IMR-90 (cell line): ENCODE measurements at regions of chr1 and their contacts with region 1.

Region 1: GRCh38 chr1:17059739-17060460 is 6.1 kb upstream of the SDHB start:
- DNase-seq: peak; percentile 71
- ATAC-seq: peak; percentile 93
- H3K4me3 ChIP-seq: no peak overlapping the region
- H3K27ac ChIP-seq: no peak overlapping the region
- H3K4me1 ChIP-seq: no peaks in the 10 kb centered on the region
- H3K27me3 ChIP-seq: no peaks in the 10 kb centered on the region
- CTCF ChIP-seq: peak; percentile 91
- POLR2A ChIP-seq: no peak
- RAD21 ChIP-seq: peak; percentile 95

Region 2: DNA sequence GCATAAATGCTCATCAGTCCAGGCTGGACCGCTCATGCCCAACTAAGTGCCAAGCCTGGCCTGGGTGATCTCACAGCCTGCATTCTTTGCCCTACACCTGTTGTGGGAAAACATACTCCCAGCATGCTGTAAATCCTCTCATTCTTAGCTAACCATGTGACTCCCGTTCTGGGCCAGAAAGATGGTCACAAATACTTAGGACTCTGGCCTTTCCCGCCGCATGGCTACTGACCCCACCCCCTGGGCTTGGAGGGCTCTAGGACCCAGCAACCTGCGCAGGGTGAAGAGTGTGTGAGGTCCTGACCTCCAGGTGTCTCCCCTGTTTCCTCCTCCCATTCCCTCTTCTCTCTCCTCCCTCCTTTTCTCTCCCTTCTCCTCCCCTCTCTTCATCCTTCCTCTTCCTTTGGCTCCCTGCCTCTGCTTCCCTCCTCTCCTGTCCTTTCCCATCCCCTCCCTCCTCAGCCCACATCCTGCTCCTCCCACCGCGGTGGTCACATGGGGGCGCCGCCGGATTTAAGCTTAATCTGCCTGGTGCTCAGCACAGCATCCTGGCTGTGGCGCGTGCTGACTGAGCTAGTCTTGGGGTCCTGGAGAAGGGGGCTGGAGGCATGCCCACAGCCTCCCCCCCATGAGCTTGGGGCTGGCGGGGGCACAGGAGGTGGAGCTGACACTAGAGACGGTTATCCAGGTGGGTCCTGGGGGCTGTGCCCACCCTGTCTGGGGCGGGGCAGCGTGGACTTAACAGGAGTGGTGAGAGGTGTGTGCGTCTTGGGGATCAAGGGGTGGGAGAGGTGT is 138.3 kb before region 1 on chr1 and contains the start of gene CROCC:
- CTCF ChIA-PET with region 1: no interaction called
- POLR2A ChIA-PET with region 1: no interaction called
- dilution Hi-C with region 1: no loop called
- in situ Hi-C with region 1: no loop called
- intact Hi-C with region 1: no loop called
- DNase-seq: no peak
- ATAC-seq: peak; percentile 60
- H3K4me3 ChIP-seq: no peak within 1 kb of the TSS
- H3K27ac ChIP-seq: no peak within 1 kb of the TSS
- H3K4me1 ChIP-seq: peaks cover 5% of the 10 kb centered on the region; the same call in 1 of the 2 replicates
- H3K27me3 ChIP-seq: no peaks in the 10 kb centered on the region; the same call in 1 of the 2 replicates
- CTCF ChIP-seq: no peak
- POLR2A ChIP-seq: no peak
- RAD21 ChIP-seq: no peak
- total RNA-seq, gene CROCC: 7.2 and 7.5 TPM in 2 replicates

Region 3: GRCh38 chr1:17236779-17237560 is 177.1 kb after region 1 on chr1:
- CTCF ChIA-PET with region 1: interaction called, 3 read pairs
- POLR2A ChIA-PET with region 1: no interaction called
- dilution Hi-C with region 1: no loop called
- in situ Hi-C with region 1: loop called (anchors 5 kb)
- intact Hi-C with region 1: loop called (anchors 1 kb)
- DNase-seq: peak; percentile 75
- ATAC-seq: peak; percentile 65
- H3K4me3 ChIP-seq: no peak overlapping the region
- H3K27ac ChIP-seq: no peak overlapping the region
- H3K4me1 ChIP-seq: peaks cover 13% of the 10 kb centered on the region
- H3K27me3 ChIP-seq: peaks cover 18% of the 10 kb centered on the region
- CTCF ChIP-seq: peak; percentile 90
- POLR2A ChIP-seq: peak; percentile 58; the same call in 1 of the 2 replicates
- RAD21 ChIP-seq: peak; percentile 97

Region 4: DNA sequence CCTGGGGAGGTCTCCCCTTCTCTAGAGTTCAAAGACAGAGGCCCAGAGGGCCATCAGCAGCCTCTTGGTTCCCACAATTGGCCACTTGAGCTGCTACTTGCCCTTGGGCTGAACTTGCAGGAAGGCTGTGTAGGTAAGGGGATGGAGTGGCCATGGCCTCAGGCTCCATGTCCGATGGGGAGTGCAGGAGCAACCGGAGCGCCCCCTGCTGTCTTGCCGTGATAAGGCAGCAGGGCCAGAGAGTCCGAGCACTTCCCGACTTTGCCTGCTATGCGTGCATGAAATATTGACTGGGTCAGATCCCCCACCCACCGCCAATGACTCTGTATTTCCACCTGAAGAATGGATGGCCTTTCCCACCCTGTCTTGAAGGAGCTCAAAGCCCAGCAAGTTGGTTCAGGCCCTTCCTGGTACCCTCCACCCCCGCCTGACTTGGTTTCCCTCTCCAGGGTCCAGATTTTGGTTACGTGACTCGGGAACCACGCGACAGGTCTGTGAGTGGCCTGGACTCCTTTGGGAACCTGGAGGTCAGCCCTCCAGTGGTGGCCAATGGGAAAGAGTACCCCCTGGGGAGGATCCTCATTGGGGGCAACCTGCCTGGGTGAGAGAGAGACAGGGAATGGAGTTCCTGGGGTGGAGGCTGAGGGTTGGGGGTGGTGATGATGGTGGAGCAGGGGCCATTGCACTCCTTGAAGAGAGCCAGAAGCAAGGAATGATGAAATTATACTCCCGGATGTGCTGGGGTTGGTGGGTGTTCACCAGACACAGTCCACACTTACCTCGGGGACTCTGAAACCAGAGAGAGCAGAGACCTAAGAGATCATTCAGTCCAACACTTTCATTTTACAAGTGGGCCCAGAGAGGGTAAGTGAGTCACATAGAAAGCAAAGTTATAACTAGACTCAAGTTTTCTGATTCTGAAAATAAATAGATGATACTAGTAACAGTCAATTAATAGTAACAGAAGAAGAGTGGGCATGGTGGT is 214.6 kb after region 1 on chr1:
- CTCF ChIA-PET with region 1: no interaction called
- POLR2A ChIA-PET with region 1: no interaction called
- dilution Hi-C with region 1: no loop called
- in situ Hi-C with region 1: no loop called
- intact Hi-C with region 1: loop called (anchors 1 kb)
- DNase-seq: peak; percentile 29
- ATAC-seq: peak; percentile 85
- H3K4me3 ChIP-seq: no peak overlapping the region
- H3K27ac ChIP-seq: no peak overlapping the region
- H3K4me1 ChIP-seq: no peaks in the 10 kb centered on the region
- H3K27me3 ChIP-seq: peaks cover 21% of the 10 kb centered on the region
- CTCF ChIP-seq: peak; percentile 63
- POLR2A ChIP-seq: no peak
- RAD21 ChIP-seq: peak; percentile 68

Region 5: DNA sequence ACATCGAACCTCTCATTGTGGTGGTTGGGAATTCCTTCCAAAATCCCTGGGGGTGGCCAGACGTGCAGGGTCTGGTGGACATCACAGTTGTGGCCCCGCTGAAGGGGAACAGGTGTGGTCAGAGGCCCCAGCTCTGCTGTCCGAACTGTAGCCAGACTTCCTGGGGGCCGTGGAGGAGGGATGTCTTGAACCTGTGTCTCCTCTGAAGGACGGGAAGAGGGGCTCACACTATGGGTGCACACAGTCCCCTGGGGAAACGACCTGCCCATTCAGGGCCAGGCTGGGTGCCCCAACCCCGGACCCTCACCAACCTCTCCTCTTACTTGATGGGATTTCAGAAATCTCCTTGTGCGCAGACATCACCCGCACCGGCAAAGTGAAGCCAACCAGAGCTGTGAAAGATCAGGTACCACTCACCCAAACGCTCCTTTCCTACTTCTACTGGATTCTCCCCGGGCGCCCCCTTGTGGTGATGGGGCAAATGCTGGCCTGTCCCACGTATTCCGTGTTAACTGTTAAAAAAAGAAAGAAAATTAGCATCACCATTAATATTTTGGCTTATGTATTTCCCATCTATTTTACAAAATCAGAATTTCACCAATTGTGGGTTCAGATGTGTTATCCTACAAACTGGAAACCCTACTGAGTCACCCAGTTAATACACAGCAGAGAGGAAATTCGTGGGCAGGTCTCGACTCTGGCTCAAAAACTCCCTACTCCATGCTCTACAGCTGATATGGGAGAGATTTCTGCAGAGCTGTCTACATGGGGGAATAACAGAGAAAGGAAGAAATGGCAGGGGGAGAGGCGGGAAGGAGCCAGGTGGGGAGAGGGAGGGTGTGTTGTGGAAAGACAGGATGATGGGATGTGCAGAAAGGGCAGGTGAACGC is 276.2 kb after region 1 on chr1:
- CTCF ChIA-PET with region 1: no interaction called
- POLR2A ChIA-PET with region 1: no interaction called
- dilution Hi-C with region 1: no loop called
- in situ Hi-C with region 1: no loop called
- intact Hi-C with region 1: loop called (anchors 1 kb)
- DNase-seq: peak; percentile 41
- ATAC-seq: peak; percentile 84
- H3K4me3 ChIP-seq: no peak overlapping the region
- H3K27ac ChIP-seq: no peak overlapping the region
- H3K4me1 ChIP-seq: no peaks in the 10 kb centered on the region
- H3K27me3 ChIP-seq: peaks cover 18% of the 10 kb centered on the region
- CTCF ChIP-seq: peak; percentile 79
- POLR2A ChIP-seq: no peak
- RAD21 ChIP-seq: peak; percentile 71

Region 6: DNA sequence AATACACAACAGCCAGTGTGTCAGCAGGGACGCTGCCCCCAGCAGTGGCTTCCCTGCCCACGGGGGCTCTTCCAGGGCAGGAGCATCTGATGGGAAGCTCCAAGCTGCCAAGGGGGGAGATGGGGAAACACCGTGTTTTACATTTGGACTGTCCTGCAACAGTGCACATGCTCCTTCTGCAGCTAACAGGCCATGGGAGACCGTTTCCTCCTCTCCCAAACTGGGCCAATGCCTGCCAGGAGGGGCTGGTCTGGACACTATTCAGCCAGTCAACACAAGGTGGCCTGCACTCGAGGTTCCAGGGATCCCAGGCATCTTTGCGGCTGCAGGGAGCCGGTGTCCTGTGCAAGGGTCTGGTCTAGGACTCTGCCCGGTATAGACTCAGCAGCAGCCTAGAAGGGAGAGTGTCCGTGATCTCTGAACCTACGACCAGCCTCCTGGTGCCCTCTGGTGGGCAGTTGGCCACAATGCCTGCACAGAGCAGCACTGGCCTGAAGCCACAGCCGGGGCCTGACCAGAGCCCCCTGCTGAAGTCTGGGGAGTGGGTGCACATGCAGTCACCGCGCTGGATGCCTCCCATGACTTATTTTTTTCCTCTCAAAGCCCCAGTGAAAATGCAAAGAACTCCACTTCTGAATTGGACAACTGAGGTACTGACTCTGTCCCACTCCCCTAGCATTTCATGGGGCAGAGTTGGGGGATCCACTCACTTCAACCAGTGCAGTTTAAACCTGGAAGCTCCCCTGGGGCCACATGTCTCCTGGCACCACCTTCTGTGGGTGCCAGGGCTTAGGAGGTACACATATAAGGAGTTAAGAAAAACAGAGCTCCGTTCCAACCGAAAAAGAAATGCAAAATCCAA is 346.2 kb after region 1 on chr1:
- CTCF ChIA-PET with region 1: no interaction called
- POLR2A ChIA-PET with region 1: no interaction called
- dilution Hi-C with region 1: no loop called
- in situ Hi-C with region 1: loop called (anchors 5 kb)
- intact Hi-C with region 1: no loop called
- DNase-seq: peak; percentile 44
- ATAC-seq: peak; percentile 93
- H3K4me3 ChIP-seq: no peak overlapping the region
- H3K27ac ChIP-seq: no peak overlapping the region
- H3K4me1 ChIP-seq: peaks cover 2% of the 10 kb centered on the region; the same call in 1 of the 2 replicates
- H3K27me3 ChIP-seq: no peaks in the 10 kb centered on the region
- CTCF ChIP-seq: peak; percentile 67
- POLR2A ChIP-seq: no peak
- RAD21 ChIP-seq: peak; percentile 65

Region 7: GRCh38 chr1:17596651-17597509 is 537.0 kb after region 1 on chr1:
- CTCF ChIA-PET with region 1: no interaction called
- POLR2A ChIA-PET with region 1: no interaction called
- dilution Hi-C with region 1: no loop called
- in situ Hi-C with region 1: no loop called
- intact Hi-C with region 1: no loop called
- DNase-seq: no peak
- ATAC-seq: no peak
- H3K4me3 ChIP-seq: no peak overlapping the region
- H3K27ac ChIP-seq: no peak overlapping the region
- H3K4me1 ChIP-seq: no peaks in the 10 kb centered on the region
- H3K27me3 ChIP-seq: no peaks in the 10 kb centered on the region
- CTCF ChIP-seq: no peak
- POLR2A ChIP-seq: no peak
- RAD21 ChIP-seq: no peak